ENCODE measurements at regions of chr1 and their contacts with region 1.

Region 1: GRCh38 chr1:219990782-219991510 is 55.4 kb downstream of the EPRS1 start:
- DNase-seq: no peak
- H3K4me3 ChIP-seq: no peak overlapping the region
- H3K27ac ChIP-seq: no peak overlapping the region
- H3K4me1 ChIP-seq: no peaks in the 10 kb centered on the region
- H3K27me3 ChIP-seq: no peaks in the 10 kb centered on the region
- CTCF ChIP-seq: peak in 1 of 3 experiments; percentile 26; a peak in 2 of 4 replicates
- EP300 ChIP-seq: no peak
- POLR2A ChIP-seq: no peak
- RAD21 ChIP-seq: peak in 1 of 2 experiments; percentile 49; a peak in 3 of 4 replicates

Region 2: DNA sequence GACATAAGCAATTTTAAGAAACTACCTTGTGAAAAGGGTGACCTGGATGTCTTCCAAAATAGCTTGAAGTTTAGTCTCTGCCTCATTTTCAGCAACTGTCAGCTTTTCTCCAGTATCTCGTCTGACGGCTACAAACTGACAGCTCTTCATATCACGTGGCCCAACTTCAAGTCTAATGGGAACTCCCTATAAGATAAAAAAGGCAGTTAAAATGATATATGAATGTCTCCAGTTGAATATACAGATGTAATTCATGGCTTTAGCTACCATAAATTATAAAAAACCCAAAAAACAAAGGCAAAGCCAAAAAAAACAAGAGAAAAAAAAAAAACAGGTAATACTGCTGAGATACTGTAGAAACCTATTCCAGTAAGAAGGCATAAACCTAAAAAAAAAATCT is 17.7 kb before region 1 on chr1:
- CTCF ChIA-PET with region 1: interaction called, 13 read pairs
- POLR2A ChIA-PET with region 1: no interaction called
- DNase-seq: no peak
- H3K4me3 ChIP-seq: no peak overlapping the region
- H3K27ac ChIP-seq: no peak overlapping the region
- H3K4me1 ChIP-seq: no peaks in the 10 kb centered on the region
- H3K27me3 ChIP-seq: peaks cover 0 to 1% (median 0%) of the 10 kb centered on the region in 4 experiments; a peak in 1 of 7 replicates
- CTCF ChIP-seq: no peak
- EP300 ChIP-seq: no peak
- POLR2A ChIP-seq: no peak
- RAD21 ChIP-seq: no peak

Region 3: DNA sequence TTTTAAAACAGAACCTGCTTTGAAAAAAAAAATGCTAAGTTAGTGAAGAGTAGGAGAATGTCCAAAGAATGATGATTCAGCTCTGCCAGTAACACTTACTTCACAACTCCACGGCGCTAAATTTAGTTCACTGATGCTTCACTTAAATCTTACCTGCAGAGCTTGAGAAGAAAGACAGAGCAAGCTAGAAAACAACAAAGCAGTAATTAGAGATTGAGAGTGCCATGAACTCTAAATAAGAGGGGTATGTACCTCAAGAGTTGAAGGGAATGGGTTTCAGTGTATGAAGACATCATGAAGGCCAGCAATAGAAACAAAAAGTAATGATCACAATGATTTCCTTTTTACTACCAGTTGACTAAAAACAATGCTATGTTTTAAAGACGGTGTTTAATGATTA is 22.6 kb after region 1 on chr1:
- CTCF ChIA-PET with region 1: interaction called, 21 read pairs
- POLR2A ChIA-PET with region 1: no interaction called
- DNase-seq: no peak
- H3K4me3 ChIP-seq: no peak overlapping the region
- H3K27ac ChIP-seq: no peak overlapping the region
- H3K4me1 ChIP-seq: no peaks in the 10 kb centered on the region
- H3K27me3 ChIP-seq: no peaks in the 10 kb centered on the region
- CTCF ChIP-seq: no peak
- EP300 ChIP-seq: no peak
- POLR2A ChIP-seq: no peak
- RAD21 ChIP-seq: no peak

Region 4: GRCh38 chr1:220084460-220084859 is 93.5 kb after region 1 on chr1:
- CTCF ChIA-PET with region 1: interaction called, 12 read pairs
- POLR2A ChIA-PET with region 1: no interaction called
- DNase-seq: no peak
- H3K4me3 ChIP-seq: no peak overlapping the region
- H3K27ac ChIP-seq: no peak overlapping the region
- H3K4me1 ChIP-seq: no peaks in the 10 kb centered on the region
- H3K27me3 ChIP-seq: no peaks in the 10 kb centered on the region
- CTCF ChIP-seq: no peak
- EP300 ChIP-seq: no peak
- POLR2A ChIP-seq: no peak
- RAD21 ChIP-seq: no peak